ENCODE measurements at regions of chrX and their contacts with region 1.

Region 1: GRCh38 chrX:25968920-25969319 is 169.2 kb upstream of the MAGEB18 start:
- DNase-seq: peak; percentile 66

Region 2: GRCh38 chrX:25523574-25524540 is 445.1 kb before region 1 on chrX:
- intact Hi-C with region 1: loop called (anchors 10 kb)
- DNase-seq: no peak

Region 3: GRCh38 chrX:25674776-25675175 is 294.1 kb before region 1 on chrX:
- intact Hi-C with region 1: no loop called
- DNase-seq: no peak

Region 4: DNA sequence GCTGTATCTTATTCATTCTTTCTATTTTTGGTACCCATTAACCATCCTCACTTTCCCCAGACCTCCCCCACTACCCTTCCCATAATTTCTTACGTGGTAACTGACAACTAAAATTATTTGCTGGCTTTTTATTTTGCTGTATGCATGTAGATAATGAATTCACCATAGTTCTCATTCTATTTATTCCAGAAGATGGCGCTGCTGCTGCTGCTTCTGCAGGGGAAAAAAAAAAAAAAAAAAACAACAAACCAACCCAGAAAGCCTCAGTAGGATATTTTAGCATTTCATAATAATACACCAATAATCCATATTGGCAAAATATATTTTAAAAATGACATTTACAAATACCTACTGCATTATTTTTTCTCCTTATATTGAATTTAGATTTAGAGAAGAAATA is 247.4 kb before region 1 on chrX:
- intact Hi-C with region 1: loop called (anchors 2 kb)
- DNase-seq: no peak

Measured in cardiac septum (tissue), 1 donor.